ENCODE measurements at regions of chr7 and their contacts with region 1.

Region 1: DNA sequence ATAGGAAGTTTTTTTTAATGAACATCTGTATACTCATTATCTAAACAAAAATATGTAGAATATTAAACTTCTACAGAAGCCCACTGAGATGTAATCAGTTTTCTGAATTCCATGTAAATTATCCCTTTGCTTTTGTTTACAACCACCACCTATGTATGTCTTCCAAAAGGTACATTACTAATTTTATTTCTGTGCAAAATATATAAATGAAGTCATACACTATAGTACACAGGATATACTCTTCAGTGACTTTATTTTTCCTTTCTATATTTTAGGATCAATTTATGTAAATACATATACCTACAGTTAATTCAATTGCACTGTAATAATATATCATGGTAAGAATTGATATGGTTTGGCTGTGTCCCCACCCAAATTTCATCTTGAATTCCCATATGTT is 1236.9 kb downstream of the DNAJB9 start:
- DNase-seq: no peak
- H3K4me3 ChIP-seq: no peak overlapping the region
- H3K27ac ChIP-seq: no peak overlapping the region
- H3K4me1 ChIP-seq: no peaks in the 10 kb centered on the region
- H3K27me3 ChIP-seq: no peaks in the 10 kb centered on the region
- CTCF ChIP-seq: no peak
- EP300 ChIP-seq: no peak
- POLR2A ChIP-seq: no peak

Region 2: DNA sequence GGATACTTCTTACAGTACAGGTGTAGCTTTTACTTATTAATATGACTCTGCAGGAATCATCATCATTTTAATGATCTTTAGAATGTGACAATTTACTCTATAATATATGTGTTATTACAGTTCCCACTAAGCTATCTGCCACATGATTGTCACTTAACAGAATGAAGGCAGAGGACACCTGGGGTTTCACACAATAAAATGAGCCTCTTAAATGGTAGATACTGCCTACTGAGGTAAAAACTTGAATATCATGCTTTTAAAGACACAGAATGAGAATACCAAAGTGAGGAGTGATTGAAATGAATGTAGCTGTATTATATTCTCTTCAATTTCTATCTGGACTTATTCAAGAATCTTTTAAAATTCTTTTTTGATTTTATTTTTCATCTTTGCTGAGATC is 29.0 kb after region 1 on chr7:
- in situ Hi-C with region 1: no loop called
- intact Hi-C with region 1: loop called (anchors 1 kb)
- DNase-seq: no peak
- H3K4me3 ChIP-seq: no peak overlapping the region
- H3K27ac ChIP-seq: no peak overlapping the region
- H3K4me1 ChIP-seq: no peaks in the 10 kb centered on the region
- H3K27me3 ChIP-seq: no peaks in the 10 kb centered on the region
- CTCF ChIP-seq: no peak
- EP300 ChIP-seq: no peak
- POLR2A ChIP-seq: no peak

Region 3: GRCh38 chr7:109864230-109864629 is 57.7 kb after region 1 on chr7:
- in situ Hi-C with region 1: no loop called
- intact Hi-C with region 1: no loop called
- DNase-seq: no peak
- H3K4me3 ChIP-seq: no peak overlapping the region
- H3K27ac ChIP-seq: no peak overlapping the region
- H3K4me1 ChIP-seq: no peaks in the 10 kb centered on the region
- H3K27me3 ChIP-seq: no peaks in the 10 kb centered on the region
- CTCF ChIP-seq: no peak
- EP300 ChIP-seq: no peak
- POLR2A ChIP-seq: no peak